Psoas muscle (tissue), 8 donors: ENCODE measurements at regions of chr2 and their contacts with region 1.

Region 1: GRCh38 chr2:119301413-119301812 is 65.2 kb downstream of the C2orf76 start:
- DNase-seq: no peak
- ATAC-seq: no peak
- H3K4me3 ChIP-seq: no peak overlapping the region
- H3K27ac ChIP-seq: no peak overlapping the region
- H3K4me1 ChIP-seq: peaks cover 8% of the 10 kb centered on the region
- H3K27me3 ChIP-seq: no peaks in the 10 kb centered on the region
- CTCF ChIP-seq: no peak

Region 2: DNA sequence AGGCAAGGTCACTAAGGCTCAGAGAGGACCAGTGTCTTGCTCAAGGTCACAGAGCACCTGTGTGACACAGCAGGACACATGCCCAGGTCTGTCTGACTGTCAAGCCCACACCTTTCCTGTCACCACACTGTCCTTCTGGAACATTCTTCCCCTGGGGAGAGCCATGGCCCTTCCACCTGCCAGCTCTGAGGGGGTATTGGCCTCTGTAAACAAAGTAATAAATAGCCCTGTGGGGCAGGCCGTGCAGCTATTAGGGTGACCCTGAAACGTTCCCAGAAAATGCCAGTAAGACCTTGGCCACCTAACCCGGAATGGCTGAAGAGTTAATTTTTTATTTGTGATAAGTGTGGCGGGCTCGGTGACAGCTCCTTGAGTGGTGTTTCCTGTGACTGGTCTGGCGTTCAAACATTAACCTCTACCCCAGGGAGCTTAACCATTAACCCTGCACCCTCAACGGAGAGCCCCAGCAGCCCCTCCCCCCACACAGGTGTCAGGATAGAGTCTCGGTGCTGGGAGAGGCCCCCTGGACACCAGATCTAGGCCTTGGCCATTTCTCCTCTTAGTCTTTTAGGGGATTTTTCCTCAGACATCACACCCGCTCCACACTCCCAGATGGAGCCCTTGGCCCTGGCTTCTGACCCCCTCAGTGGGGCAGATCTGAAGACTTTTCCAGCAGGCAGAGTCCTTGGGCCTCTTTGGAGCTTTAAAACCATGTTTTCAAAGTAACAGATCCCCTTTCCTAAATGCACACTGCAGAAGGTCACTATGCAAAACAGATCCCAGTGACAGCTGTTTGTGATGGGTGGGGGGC is 186.2 kb after region 1 on chr2:
- intact Hi-C with region 1: loop called in 1 of 2 experiments (anchors 10 kb)
- DNase-seq: no peak
- ATAC-seq: no peak
- H3K4me3 ChIP-seq: no peak overlapping the region
- H3K27ac ChIP-seq: peak overlapping the region; percentile 71
- H3K4me1 ChIP-seq: peaks cover 66% of the 10 kb centered on the region
- H3K27me3 ChIP-seq: no peaks in the 10 kb centered on the region
- CTCF ChIP-seq: no peak